ENCODE measurements at regions of chr3 and their contacts with region 1.

Region 1: DNA sequence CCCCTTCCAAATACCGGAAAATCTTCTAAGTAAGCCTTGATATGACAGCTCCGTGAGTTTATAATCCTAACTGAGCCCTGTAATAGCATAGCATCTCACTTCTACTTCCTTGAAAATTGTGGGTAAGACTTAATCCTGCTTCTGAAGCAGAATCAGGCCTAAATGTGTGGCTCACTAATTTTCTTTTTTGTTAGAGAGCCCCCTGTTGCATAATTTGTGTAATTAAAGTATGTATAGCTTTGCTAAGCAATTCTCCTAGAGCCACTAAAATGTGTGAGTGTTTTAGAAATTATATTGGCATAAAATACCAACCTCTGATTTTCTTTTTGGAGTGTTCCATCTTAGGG is 304.4 kb downstream of the FGF12 start:
- DNase-seq: no peak
- H3K4me3 ChIP-seq: no peak overlapping the region
- H3K27ac ChIP-seq: no peak overlapping the region
- H3K4me1 ChIP-seq: no peaks in the 10 kb centered on the region
- H3K27me3 ChIP-seq: no peaks in the 10 kb centered on the region
- CTCF ChIP-seq: peak in 2 of 4 experiments; percentile 45 to 50
- POLR2A ChIP-seq: no peak

Region 2: DNA sequence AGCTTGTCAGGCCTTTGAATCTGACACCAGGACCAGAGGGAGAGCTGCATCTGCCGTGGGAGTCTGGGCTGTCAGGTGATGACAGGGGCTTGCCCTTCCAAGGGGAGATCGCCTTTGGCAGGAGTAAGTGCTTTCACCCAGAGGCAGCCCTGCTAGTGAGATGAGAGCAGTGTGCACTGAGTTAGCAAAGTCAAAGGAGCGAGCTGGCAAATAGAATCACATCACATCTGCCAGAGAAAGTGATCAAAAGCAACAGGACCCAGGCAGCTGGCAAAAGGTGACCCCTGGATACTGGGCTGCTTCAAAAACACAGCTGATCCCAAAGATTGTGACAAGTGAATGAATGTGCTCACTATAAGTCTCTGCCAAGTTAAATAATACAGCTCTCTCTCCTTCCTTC is 998.1 kb before region 1 on chr3:
- intact Hi-C with region 1: loop called (anchors 5 kb)
- DNase-seq: no peak
- H3K4me3 ChIP-seq: no peak overlapping the region
- H3K27ac ChIP-seq: no peak overlapping the region
- H3K4me1 ChIP-seq: no peaks in the 10 kb centered on the region
- H3K27me3 ChIP-seq: no peaks in the 10 kb centered on the region
- CTCF ChIP-seq: no peak
- POLR2A ChIP-seq: no peak

Region 3: GRCh38 chr3:192188218-192188835 is 234.6 kb before region 1 on chr3:
- intact Hi-C with region 1: loop called (anchors 10 kb)
- DNase-seq: peak; percentile 36
- H3K4me3 ChIP-seq: no peak overlapping the region
- H3K27ac ChIP-seq: no peak overlapping the region
- H3K4me1 ChIP-seq: no peaks in the 10 kb centered on the region
- H3K27me3 ChIP-seq: no peaks in the 10 kb centered on the region
- CTCF ChIP-seq: peak; percentile 20 to 65 (median 38)
- POLR2A ChIP-seq: no peak